ENCODE measurements at regions of chr2 and their contacts with region 1.

Region 1: DNA sequence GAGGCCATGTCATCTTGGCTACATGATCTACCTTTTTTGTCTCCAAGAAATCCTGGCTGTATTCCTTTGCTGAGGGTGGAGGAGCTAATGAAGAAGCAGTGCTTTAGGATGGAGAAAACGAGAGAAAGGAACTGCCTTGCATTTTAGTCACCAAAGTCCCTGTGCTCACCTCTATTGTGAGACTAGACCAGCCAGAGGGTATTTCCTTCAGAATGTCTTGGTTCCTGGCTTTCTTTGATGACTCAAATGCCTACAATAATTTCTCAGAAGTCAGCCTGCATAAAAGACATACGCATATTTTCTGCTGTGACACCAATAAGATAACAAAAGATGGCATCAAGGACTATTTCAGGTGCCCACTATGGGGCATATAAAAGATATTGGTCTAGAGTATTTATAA is 10.8 kb downstream of the SF3B6 start:
- DNase-seq: no peak
- H3K4me3 ChIP-seq: no peak overlapping the region
- H3K4me1 ChIP-seq: no peaks in the 10 kb centered on the region
- H3K27me3 ChIP-seq: no peaks in the 10 kb centered on the region

Region 2: GRCh38 chr2:23824777-23825212 is 240.5 kb before region 1 on chr2:
- in situ Hi-C with region 1: loop called (anchors 10 kb)
- DNase-seq: peak; percentile 36 to 60
- H3K4me3 ChIP-seq: no peak overlapping the region
- H3K4me1 ChIP-seq: no peaks in the 10 kb centered on the region
- H3K27me3 ChIP-seq: no peaks in the 10 kb centered on the region

Region 3: DNA sequence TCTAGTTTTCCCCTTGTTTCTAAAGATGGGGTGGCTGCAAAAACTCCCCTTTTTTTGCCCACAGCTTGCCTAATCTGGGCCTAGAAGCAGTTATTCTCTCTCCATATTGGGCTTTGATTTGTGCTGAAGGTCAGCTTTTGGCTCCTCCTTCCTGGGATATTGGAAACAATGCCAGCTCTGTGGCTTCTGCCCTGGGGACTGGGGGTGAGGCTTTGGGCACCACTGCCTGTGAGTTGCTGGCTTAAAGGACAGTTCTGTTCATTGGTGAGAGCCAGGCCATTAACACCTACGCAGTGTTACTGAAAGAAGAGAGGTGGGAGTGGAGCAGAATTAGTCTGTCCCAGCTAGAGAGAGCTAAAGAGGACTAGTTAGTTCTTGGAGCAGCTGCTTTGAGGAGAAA is 120.8 kb before region 1 on chr2:
- in situ Hi-C with region 1: no loop called
- DNase-seq: no peak
- H3K4me3 ChIP-seq: no peak overlapping the region
- H3K4me1 ChIP-seq: peaks cover 8% of the 10 kb centered on the region
- H3K27me3 ChIP-seq: no peaks in the 10 kb centered on the region